ENCODE measurements at regions of chr19 and their contacts with region 1.

Region 1: DNA sequence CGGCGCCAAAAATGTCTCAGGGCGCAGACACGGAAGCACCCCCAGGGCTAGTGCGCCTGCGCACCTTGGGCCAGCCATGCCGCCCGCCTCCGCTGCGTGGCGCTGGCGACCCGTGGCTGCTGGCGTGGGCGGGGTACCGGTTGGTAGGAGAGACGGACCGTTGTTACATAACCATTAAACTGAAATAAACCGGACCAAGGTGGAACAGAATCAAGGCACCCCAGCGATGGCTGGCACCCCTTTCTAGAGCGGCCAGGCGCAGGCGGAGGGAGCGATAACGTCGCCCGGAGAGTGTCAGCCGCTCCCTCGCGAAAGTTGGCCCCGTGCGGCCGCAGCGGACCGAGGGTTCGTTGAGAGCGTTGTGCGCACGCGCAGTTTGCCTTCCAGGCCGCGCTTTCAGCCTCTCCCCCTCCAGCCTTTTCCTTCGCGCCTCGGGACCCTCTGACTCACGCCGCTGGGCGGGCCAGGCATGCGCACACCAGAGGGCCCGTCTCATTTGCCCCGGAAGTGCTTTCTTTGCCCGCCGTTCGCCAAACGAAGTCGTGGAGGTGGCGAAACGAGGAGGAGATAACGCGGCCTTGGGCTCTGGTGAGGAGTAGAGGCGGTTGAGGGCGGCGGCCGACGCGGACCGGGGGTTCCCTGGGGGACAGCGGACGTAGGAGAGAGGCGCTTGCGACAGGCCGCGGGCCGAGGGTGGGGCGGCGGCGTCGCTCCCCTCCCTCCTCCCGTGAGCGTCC is at the starts of genes PLEKHJ1 and SF3A2:
- DNase-seq: peak; percentile 96 to 98
- H3K4me3 ChIP-seq: peak within 1 kb of the TSS; percentile 65
- H3K4me3 Mint-ChIP-seq: peak within 1 kb of the TSS; percentile 84
- H3K27ac Mint-ChIP-seq: peak within 1 kb of the TSS; percentile 95
- H3K4me1 ChIP-seq: peaks cover 26% of the 10 kb centered on the region
- H3K4me1 Mint-ChIP-seq: peaks cover 17% of the 10 kb centered on the region
- H3K27me3 ChIP-seq: no peaks in the 10 kb centered on the region
- H3K27me3 Mint-ChIP-seq: no peaks in the 10 kb centered on the region
- CTCF ChIP-seq: peak; percentile 92 to 94
- total RNA-seq, gene PLEKHJ1: 119 TPM in 2 replicates
- total RNA-seq, gene SF3A2: 129 and 135 TPM in 2 replicates

Region 2: GRCh38 chr19:2157452-2157851 is 79.0 kb before region 1 on chr19:
- CTCF ChIA-PET with region 1: interaction called, 5 read pairs
- POLR2A ChIA-PET with region 1: no interaction called
- intact Hi-C with region 1: loop called (anchors 2 kb)
- DNase-seq: no peak
- H3K4me3 ChIP-seq: no peak overlapping the region
- H3K4me3 Mint-ChIP-seq: no peak overlapping the region
- H3K27ac Mint-ChIP-seq: no peak overlapping the region
- H3K4me1 ChIP-seq: peaks cover 36% of the 10 kb centered on the region
- H3K4me1 Mint-ChIP-seq: peaks cover 7% of the 10 kb centered on the region
- H3K27me3 ChIP-seq: no peaks in the 10 kb centered on the region
- H3K27me3 Mint-ChIP-seq: no peaks in the 10 kb centered on the region
- CTCF ChIP-seq: no peak

Region 3: GRCh38 chr19:2269244-2269947 is 32.9 kb after region 1 on chr19:
- CTCF ChIA-PET with region 1: interaction called, 8 read pairs
- POLR2A ChIA-PET with region 1: no interaction called
- intact Hi-C with region 1: loop called (anchors 2 kb)
- DNase-seq: peak; percentile 97 to 98
- H3K4me3 ChIP-seq: peak overlapping the region; percentile 99
- H3K4me3 Mint-ChIP-seq: peak overlapping the region; percentile 82
- H3K27ac Mint-ChIP-seq: peak overlapping the region; percentile 93
- H3K4me1 ChIP-seq: peaks cover 7% of the 10 kb centered on the region; the same call in 1 of the 2 replicates
- H3K4me1 Mint-ChIP-seq: no peaks in the 10 kb centered on the region
- H3K27me3 ChIP-seq: no peaks in the 10 kb centered on the region
- H3K27me3 Mint-ChIP-seq: no peaks in the 10 kb centered on the region
- CTCF ChIP-seq: no peak

Region 4: DNA sequence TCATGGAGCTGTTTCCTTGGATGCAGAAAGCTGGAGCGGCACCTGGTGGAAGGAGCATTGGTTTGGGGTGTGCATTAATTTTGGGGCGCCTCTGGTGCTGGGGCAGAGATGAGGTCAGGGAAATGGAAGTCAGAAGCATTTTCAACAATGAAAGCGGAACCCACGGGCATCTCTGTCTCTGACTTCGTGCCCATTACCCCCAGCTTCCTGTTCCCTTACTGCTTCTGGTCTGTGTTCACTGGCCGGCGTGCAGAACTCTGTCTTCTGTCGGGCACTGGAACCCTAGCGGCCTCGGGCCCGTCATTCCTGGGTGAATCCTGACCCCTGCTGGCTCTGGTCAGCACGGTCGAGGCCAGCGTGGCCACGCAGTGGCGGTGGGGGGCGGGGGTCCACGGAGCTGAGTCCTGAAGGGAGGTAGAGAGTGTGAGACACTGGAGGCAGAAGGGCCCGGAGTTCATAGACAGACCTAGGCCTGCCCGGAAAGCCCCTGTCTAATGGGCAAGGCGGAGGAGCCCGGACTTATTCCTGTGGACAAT is 79.4 kb after region 1 on chr19:
- CTCF ChIA-PET with region 1: no interaction called
- POLR2A ChIA-PET with region 1: no interaction called
- intact Hi-C with region 1: loop called (anchors 5 kb)
- DNase-seq: peak in 1 of 2 experiments; percentile 61
- H3K4me3 ChIP-seq: no peak overlapping the region
- H3K4me3 Mint-ChIP-seq: no peak overlapping the region
- H3K27ac Mint-ChIP-seq: no peak overlapping the region
- H3K4me1 ChIP-seq: no peaks in the 10 kb centered on the region
- H3K4me1 Mint-ChIP-seq: no peaks in the 10 kb centered on the region
- H3K27me3 ChIP-seq: no peaks in the 10 kb centered on the region
- H3K27me3 Mint-ChIP-seq: no peaks in the 10 kb centered on the region
- CTCF ChIP-seq: peak; percentile 38 to 57

Region 5: GRCh38 chr19:2391118-2391725 is 154.7 kb after region 1 on chr19:
- CTCF ChIA-PET with region 1: no interaction called
- POLR2A ChIA-PET with region 1: interaction called, 4 read pairs
- intact Hi-C with region 1: loop called (anchors 1 kb)
- DNase-seq: peak; percentile 53 to 56
- H3K4me3 ChIP-seq: no peak overlapping the region
- H3K4me3 Mint-ChIP-seq: no peak overlapping the region
- H3K27ac Mint-ChIP-seq: no peak overlapping the region
- H3K4me1 ChIP-seq: peaks cover 15% of the 10 kb centered on the region
- H3K4me1 Mint-ChIP-seq: peaks cover 6% of the 10 kb centered on the region
- H3K27me3 ChIP-seq: no peaks in the 10 kb centered on the region
- H3K27me3 Mint-ChIP-seq: no peaks in the 10 kb centered on the region
- CTCF ChIP-seq: peak; percentile 77 to 78

Region 6: GRCh38 chr19:2427429-2428320 is 191.2 kb after region 1 on chr19 and contains the start of gene TIMM13:
- CTCF ChIA-PET with region 1: no interaction called
- POLR2A ChIA-PET with region 1: interaction called, 3 read pairs
- intact Hi-C with region 1: loop called (anchors 1 kb)
- DNase-seq: peak; percentile 96
- H3K4me3 ChIP-seq: peak within 1 kb of the TSS; percentile 68
- H3K4me3 Mint-ChIP-seq: peak within 1 kb of the TSS; percentile 93
- H3K27ac Mint-ChIP-seq: peak within 1 kb of the TSS; percentile 100
- H3K4me1 ChIP-seq: peaks cover 20% of the 10 kb centered on the region
- H3K4me1 Mint-ChIP-seq: peaks cover 5% of the 10 kb centered on the region
- H3K27me3 ChIP-seq: no peaks in the 10 kb centered on the region
- H3K27me3 Mint-ChIP-seq: no peaks in the 10 kb centered on the region
- CTCF ChIP-seq: no peak
- total RNA-seq, gene TIMM13: 200 and 217 TPM in 2 replicates

Measured in Caco-2 (cell line).